K562 (cell line): ENCODE measurements at regions of chr1 and their contacts with region 1.

Region 1: GRCh38 chr1:166538646-166539045 is 300.6 kb upstream of the POGK start:
- DNase-seq: no peak
- ATAC-seq: no peak
- H3K4me3 ChIP-seq: no peak overlapping the region
- H3K27ac ChIP-seq: no peak overlapping the region
- H3K4me1 ChIP-seq: no peaks in the 10 kb centered on the region
- H3K27me3 ChIP-seq: no peaks in the 10 kb centered on the region
- CTCF ChIP-seq: no peak
- EP300 ChIP-seq: no peak
- POLR2A ChIP-seq: no peak
- RAD21 ChIP-seq: no peak

Region 2: GRCh38 chr1:166527752-166528151 is 10.9 kb before region 1 on chr1:
- CTCF ChIA-PET with region 1: no interaction called
- POLR2A ChIA-PET with region 1: interaction called, 11 read pairs
- in situ Hi-C with region 1: no loop called
- intact Hi-C with region 1: no loop called
- DNase-seq: no peak
- ATAC-seq: no peak
- H3K4me3 ChIP-seq: no peak overlapping the region
- H3K27ac ChIP-seq: no peak overlapping the region
- H3K4me1 ChIP-seq: no peaks in the 10 kb centered on the region
- H3K27me3 ChIP-seq: no peaks in the 10 kb centered on the region
- CTCF ChIP-seq: no peak
- EP300 ChIP-seq: no peak
- POLR2A ChIP-seq: no peak
- RAD21 ChIP-seq: no peak

Region 3: DNA sequence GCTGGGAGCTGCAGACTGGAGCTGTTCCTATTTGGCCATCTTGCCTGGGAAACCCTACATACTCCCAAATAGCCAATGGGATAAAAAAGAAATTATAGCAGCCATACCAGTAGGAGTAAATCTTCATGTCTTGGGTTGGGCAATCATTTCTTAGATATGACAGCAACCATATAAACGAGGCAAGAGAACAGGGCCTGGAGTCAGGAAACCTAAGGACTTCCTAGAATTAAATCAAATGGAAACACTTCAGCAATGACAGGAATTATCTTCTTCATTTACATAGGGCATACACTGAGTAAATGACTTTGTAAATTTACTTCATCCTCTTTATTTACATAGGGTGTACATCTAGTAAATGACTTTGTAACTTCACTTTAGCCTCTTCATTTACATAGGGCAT is 14.1 kb after region 1 on chr1:
- CTCF ChIA-PET with region 1: no interaction called
- POLR2A ChIA-PET with region 1: no interaction called
- in situ Hi-C with region 1: no loop called
- intact Hi-C with region 1: no loop called
- DNase-seq: no peak
- ATAC-seq: no peak
- H3K4me3 ChIP-seq: no peak overlapping the region
- H3K27ac ChIP-seq: no peak overlapping the region
- H3K4me1 ChIP-seq: no peaks in the 10 kb centered on the region
- H3K27me3 ChIP-seq: no peaks in the 10 kb centered on the region
- CTCF ChIP-seq: no peak
- EP300 ChIP-seq: no peak
- POLR2A ChIP-seq: no peak
- RAD21 ChIP-seq: no peak